CD4-positive, alpha-beta memory T cell (primary cell): ENCODE measurements at regions of chr9 and their contacts with region 1.

Region 1: GRCh38 chr9:76302947-76303940 is 91.0 kb downstream of the RFK start:
- DNase-seq: peak in 4 of 5 donors; percentile 32 to 55 (median 46)
- H3K4me3 ChIP-seq: no peak overlapping the region
- H3K4me3 Mint-ChIP-seq: no peak overlapping the region
- H3K27ac ChIP-seq: no peak overlapping the region
- H3K27ac Mint-ChIP-seq: no peak overlapping the region
- H3K4me1 ChIP-seq: no peaks in the 10 kb centered on the region
- H3K4me1 Mint-ChIP-seq: no peaks in the 10 kb centered on the region
- H3K27me3 ChIP-seq: no peaks in the 10 kb centered on the region
- H3K27me3 Mint-ChIP-seq: peaks cover 6 to 12% of the 10 kb centered on the region in 2 donors

Region 2: DNA sequence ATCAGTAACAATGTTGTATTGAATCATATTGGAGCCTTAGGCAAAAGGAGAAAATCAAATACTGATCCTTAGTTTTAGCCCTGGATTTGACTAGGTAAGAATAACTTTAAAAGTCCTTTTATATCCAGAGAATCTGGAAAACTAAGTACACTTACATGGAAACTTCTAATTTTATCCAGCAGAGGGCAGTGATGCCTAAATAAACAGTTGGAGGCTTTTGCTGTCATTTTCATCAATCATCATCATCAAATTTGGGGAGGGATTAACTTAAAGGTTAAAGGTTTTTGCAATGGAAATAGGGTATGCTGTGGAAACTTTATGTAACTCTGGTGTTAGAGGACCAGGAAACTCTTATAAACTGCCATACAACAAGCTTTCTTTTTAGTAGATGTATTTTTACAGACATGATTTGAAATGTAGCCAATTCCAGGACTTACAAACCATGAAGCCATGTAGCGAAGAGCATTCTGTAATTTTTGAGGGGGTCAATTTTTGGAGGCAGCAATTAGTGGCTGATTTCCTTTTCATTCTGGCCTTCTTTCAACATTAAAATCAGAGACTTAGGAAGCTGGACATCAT is 1102.3 kb before region 1 on chr9:
- CTCF ChIA-PET with region 1: interaction called, 3 read pairs
- POLR2A ChIA-PET with region 1: no interaction called
- intact Hi-C with region 1: loop called (anchors 2 kb)
- DNase-seq: peak in 4 of 5 donors; percentile 33 to 47 (median 41)
- H3K4me3 ChIP-seq: no peak overlapping the region
- H3K4me3 Mint-ChIP-seq: no peak overlapping the region
- H3K27ac ChIP-seq: no peak overlapping the region
- H3K27ac Mint-ChIP-seq: peak overlapping the region in 2 of 7 donors; percentile 18 to 27
- H3K4me1 ChIP-seq: no peaks in the 10 kb centered on the region
- H3K4me1 Mint-ChIP-seq: peaks cover 0 to 3% (median 2%) of the 10 kb centered on the region in 4 donors
- H3K27me3 ChIP-seq: no peaks in the 10 kb centered on the region
- H3K27me3 Mint-ChIP-seq: no peaks in the 10 kb centered on the region

Region 3: DNA sequence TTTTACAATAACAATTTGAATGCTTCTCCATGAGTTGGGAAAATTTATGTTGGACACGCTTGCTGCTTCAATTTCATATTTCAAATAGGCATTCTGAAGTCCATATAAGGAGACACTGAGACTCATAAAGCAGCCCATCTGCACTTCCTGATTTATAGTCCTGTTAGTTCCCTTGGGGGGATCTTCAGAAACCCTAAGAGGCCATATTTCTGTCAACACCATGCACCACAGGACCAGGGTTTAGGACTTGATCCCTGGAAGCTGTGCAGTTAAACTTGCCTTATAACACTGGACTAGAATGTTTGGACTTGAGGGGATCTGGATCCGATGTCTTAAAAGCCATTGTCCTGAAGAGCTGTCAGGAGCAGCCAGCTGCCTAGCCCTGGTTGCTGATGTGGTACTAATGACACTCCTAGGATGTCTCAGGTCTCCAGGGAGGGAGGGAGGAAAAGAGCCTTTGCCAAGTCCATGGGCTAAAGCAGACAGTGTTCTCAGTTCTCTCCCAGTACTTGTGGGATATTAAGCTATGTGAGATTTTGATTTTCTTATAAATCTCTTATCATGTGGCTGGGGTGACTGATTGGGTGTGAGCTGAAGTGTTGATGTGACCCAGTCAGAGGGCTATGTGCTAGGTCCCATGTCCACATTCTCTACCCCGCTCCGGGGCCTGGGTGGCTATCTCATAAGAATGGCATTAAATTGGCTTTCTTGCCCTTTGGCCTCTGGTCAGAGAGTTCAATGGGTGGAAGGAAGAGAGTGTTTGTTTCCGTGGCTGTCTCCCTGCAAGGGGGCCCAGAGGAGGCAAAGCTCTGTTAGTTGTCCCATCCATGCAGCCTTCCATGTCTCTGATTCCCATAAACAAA is 815.2 kb before region 1 on chr9:
- CTCF ChIA-PET with region 1: no interaction called
- POLR2A ChIA-PET with region 1: no interaction called
- intact Hi-C with region 1: loop called (anchors 2 kb)
- DNase-seq: peak in 1 of 5 donors; percentile 33
- H3K4me3 ChIP-seq: no peak overlapping the region
- H3K4me3 Mint-ChIP-seq: no peak overlapping the region
- H3K27ac ChIP-seq: no peak overlapping the region
- H3K27ac Mint-ChIP-seq: no peak overlapping the region
- H3K4me1 ChIP-seq: no peaks in the 10 kb centered on the region
- H3K4me1 Mint-ChIP-seq: no peaks in the 10 kb centered on the region
- H3K27me3 ChIP-seq: no peaks in the 10 kb centered on the region
- H3K27me3 Mint-ChIP-seq: peaks cover 0 to 1% of the 10 kb centered on the region in 2 donors

Region 4: DNA sequence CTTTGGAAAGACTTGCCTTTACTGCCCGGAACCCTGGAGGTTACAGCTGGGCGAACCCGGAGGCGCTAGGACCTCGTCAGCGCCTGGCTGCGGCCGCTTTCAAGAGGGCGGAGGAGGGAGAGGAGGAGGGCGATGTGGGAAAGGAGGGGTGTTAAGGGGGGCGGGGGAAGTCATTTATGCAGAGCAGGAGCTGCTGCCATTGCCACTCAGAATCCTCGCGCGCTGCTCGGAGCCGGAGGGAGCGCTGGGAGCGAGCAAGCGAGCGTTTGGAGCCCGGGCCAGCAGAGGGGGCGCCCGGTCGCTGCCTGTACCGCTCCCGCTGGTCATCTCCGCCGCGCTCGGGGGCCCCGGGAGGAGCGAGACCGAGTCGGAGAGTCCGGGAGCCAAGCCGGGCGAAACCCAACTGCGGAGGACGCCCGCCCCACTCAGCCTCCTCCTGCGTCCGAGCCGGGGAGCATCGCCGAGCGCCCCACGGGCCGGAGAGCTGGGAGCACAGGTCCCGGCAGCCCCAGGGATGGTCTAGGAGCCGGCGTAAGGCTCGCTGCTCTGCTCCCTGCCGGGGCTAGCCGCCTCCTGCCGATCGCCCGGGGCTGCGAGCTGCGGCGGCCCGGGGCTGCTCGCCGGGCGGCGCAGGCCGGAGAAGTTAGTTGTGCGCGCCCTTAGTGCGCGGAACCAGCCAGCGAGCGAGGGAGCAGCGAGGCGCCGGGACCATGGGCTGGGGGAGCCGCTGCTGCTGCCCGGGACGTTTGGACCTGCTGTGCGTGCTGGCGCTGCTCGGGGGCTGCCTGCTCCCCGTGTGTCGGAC is 412.6 kb before region 1 on chr9 and contains the start of gene PCSK5:
- CTCF ChIA-PET with region 1: no interaction called
- POLR2A ChIA-PET with region 1: no interaction called
- intact Hi-C with region 1: loop called (anchors 2 kb)
- DNase-seq: peak; percentile 81 to 91 (median 84)
- H3K4me3 ChIP-seq: peak within 1 kb of the TSS; percentile 58 to 79
- H3K4me3 Mint-ChIP-seq: peak within 1 kb of the TSS; percentile 93 to 98 (median 94)
- H3K27ac ChIP-seq: peak within 1 kb of the TSS; percentile 59
- H3K27ac Mint-ChIP-seq: peak within 1 kb of the TSS; percentile 76 to 94 (median 93)
- H3K4me1 ChIP-seq: peaks cover 24% of the 10 kb centered on the region
- H3K4me1 Mint-ChIP-seq: peaks cover 22 to 51% (median 37%) of the 10 kb centered on the region in 4 donors
- H3K27me3 ChIP-seq: no peaks in the 10 kb centered on the region
- H3K27me3 Mint-ChIP-seq: peaks cover 2 to 7% of the 10 kb centered on the region in 2 donors
- total RNA-seq, gene PCSK5: 7.9 to 8.4 TPM

Region 5: GRCh38 chr9:76023715-76024195 is 279.5 kb before region 1 on chr9:
- CTCF ChIA-PET with region 1: interaction called, 4 read pairs
- POLR2A ChIA-PET with region 1: no interaction called
- intact Hi-C with region 1: loop called (anchors 2 kb)
- DNase-seq: peak; percentile 58 to 76 (median 69)
- H3K4me3 ChIP-seq: peak overlapping the region; percentile 9 to 36
- H3K4me3 Mint-ChIP-seq: peak overlapping the region; percentile 63 to 84 (median 78)
- H3K27ac ChIP-seq: peak overlapping the region; percentile 31
- H3K27ac Mint-ChIP-seq: peak overlapping the region; percentile 76 to 96 (median 87)
- H3K4me1 ChIP-seq: peaks cover 68% of the 10 kb centered on the region
- H3K4me1 Mint-ChIP-seq: peaks cover 58 to 93% (median 75%) of the 10 kb centered on the region in 4 donors
- H3K27me3 ChIP-seq: no peaks in the 10 kb centered on the region
- H3K27me3 Mint-ChIP-seq: no peaks in the 10 kb centered on the region